B cell (primary cell): ENCODE measurements at regions of chr10 and their contacts with region 1.

Region 1: GRCh38 chr10:88886557-88886956 is 6.5 kb downstream of the STAMBPL1 start:
- DNase-seq: peak; percentile 56
- ATAC-seq: peak; percentile 77
- H3K4me3 ChIP-seq: peak overlapping the region in 3 of 5 experiments; percentile 1 to 18 (median 12)
- H3K4me3 Mint-ChIP-seq: peak overlapping the region; percentile 76
- H3K27ac ChIP-seq: peak overlapping the region; percentile 24 to 71
- H3K27ac Mint-ChIP-seq: peak overlapping the region; percentile 80
- H3K4me1 ChIP-seq: peaks cover 40 to 59% of the 10 kb centered on the region in 2 donors
- H3K4me1 Mint-ChIP-seq: peaks cover 85% of the 10 kb centered on the region
- H3K27me3 ChIP-seq: no peaks in the 10 kb centered on the region
- H3K27me3 Mint-ChIP-seq: no peaks in the 10 kb centered on the region
- CTCF ChIP-seq: no peak

Region 2: GRCh38 chr10:88901206-88901983 is 14.8 kb after region 1 on chr10:
- CTCF ChIA-PET with region 1: interaction called, 29 read pairs
- POLR2A ChIA-PET with region 1: interaction called, 47 read pairs
- intact Hi-C with region 1: loop called (anchors 1 kb)
- DNase-seq: peak; percentile 81
- ATAC-seq: peak; percentile 85
- H3K4me3 ChIP-seq: peak overlapping the region in 1 of 5 experiments; percentile 17
- H3K4me3 Mint-ChIP-seq: peak overlapping the region; percentile 74
- H3K27ac ChIP-seq: peak overlapping the region; percentile 78 to 81
- H3K27ac Mint-ChIP-seq: peak overlapping the region; percentile 98
- H3K4me1 ChIP-seq: peaks cover 38 to 64% of the 10 kb centered on the region in 2 donors
- H3K4me1 Mint-ChIP-seq: peaks cover 58% of the 10 kb centered on the region
- H3K27me3 ChIP-seq: no peaks in the 10 kb centered on the region
- H3K27me3 Mint-ChIP-seq: no peaks in the 10 kb centered on the region
- CTCF ChIP-seq: no peak